ENCODE measurements at regions of chr3 and their contacts with region 1.

Region 1: GRCh38 chr3:157130467-157131251 is 29.3 kb downstream of the CCNL1 start:
- DNase-seq: peak; percentile 97
- H3K4me3 Mint-ChIP-seq: peak overlapping the region; percentile 56
- H3K27ac Mint-ChIP-seq: peak overlapping the region; percentile 96
- H3K4me1 Mint-ChIP-seq: peaks cover 89% of the 10 kb centered on the region
- H3K27me3 Mint-ChIP-seq: no peaks in the 10 kb centered on the region
- CTCF ChIP-seq: peak; percentile 91

Region 2: GRCh38 chr3:156307704-156308103 is 823.0 kb before region 1 on chr3:
- CTCF ChIA-PET with region 1: no interaction called
- intact Hi-C with region 1: loop called (anchors 10 kb)
- DNase-seq: peak; percentile 78
- H3K4me3 Mint-ChIP-seq: no peak overlapping the region
- H3K27ac Mint-ChIP-seq: no peak overlapping the region
- H3K4me1 Mint-ChIP-seq: peaks cover 38% of the 10 kb centered on the region
- H3K27me3 Mint-ChIP-seq: peaks cover 15% of the 10 kb centered on the region
- CTCF ChIP-seq: no peak

Region 3: GRCh38 chr3:156382458-156383346 is 748.0 kb before region 1 on chr3:
- CTCF ChIA-PET with region 1: no interaction called
- intact Hi-C with region 1: loop called (anchors 10 kb)
- DNase-seq: peak; percentile 82
- H3K4me3 Mint-ChIP-seq: no peak overlapping the region
- H3K27ac Mint-ChIP-seq: no peak overlapping the region
- H3K4me1 Mint-ChIP-seq: no peaks in the 10 kb centered on the region
- H3K27me3 Mint-ChIP-seq: peaks cover 80% of the 10 kb centered on the region
- CTCF ChIP-seq: peak; percentile 94

Region 4: DNA sequence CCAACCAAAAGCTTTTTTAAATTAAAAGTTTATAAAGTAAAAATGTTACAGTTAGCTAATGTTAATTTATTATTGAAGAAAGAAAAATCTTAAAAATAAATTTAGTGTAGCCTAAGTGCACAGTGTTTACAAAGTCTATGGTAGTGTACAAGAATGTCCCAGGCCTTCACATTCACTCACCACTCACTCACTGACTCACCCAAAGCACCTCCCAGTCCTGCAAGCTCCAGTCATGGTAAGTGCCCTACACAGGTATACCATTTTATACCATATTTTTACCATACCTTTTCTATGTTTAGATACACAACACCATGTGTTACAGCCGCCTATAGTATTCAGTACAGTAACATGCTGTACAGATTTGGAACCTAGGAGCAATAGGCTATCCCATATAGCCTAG is 604.9 kb before region 1 on chr3:
- CTCF ChIA-PET with region 1: no interaction called
- intact Hi-C with region 1: no loop called
- DNase-seq: no peak
- H3K4me3 Mint-ChIP-seq: no peak overlapping the region
- H3K27ac Mint-ChIP-seq: no peak overlapping the region
- H3K4me1 Mint-ChIP-seq: no peaks in the 10 kb centered on the region
- H3K27me3 Mint-ChIP-seq: no peaks in the 10 kb centered on the region
- CTCF ChIP-seq: no peak

Region 5: GRCh38 chr3:156816800-156817645 is 313.6 kb before region 1 on chr3:
- CTCF ChIA-PET with region 1: interaction called, 7 read pairs
- intact Hi-C with region 1: loop called (anchors 2 kb)
- DNase-seq: peak; percentile 99
- H3K4me3 Mint-ChIP-seq: peak overlapping the region; percentile 94
- H3K27ac Mint-ChIP-seq: peak overlapping the region; percentile 96
- H3K4me1 Mint-ChIP-seq: peaks cover 64% of the 10 kb centered on the region
- H3K27me3 Mint-ChIP-seq: no peaks in the 10 kb centered on the region
- CTCF ChIP-seq: no peak

Region 6: DNA sequence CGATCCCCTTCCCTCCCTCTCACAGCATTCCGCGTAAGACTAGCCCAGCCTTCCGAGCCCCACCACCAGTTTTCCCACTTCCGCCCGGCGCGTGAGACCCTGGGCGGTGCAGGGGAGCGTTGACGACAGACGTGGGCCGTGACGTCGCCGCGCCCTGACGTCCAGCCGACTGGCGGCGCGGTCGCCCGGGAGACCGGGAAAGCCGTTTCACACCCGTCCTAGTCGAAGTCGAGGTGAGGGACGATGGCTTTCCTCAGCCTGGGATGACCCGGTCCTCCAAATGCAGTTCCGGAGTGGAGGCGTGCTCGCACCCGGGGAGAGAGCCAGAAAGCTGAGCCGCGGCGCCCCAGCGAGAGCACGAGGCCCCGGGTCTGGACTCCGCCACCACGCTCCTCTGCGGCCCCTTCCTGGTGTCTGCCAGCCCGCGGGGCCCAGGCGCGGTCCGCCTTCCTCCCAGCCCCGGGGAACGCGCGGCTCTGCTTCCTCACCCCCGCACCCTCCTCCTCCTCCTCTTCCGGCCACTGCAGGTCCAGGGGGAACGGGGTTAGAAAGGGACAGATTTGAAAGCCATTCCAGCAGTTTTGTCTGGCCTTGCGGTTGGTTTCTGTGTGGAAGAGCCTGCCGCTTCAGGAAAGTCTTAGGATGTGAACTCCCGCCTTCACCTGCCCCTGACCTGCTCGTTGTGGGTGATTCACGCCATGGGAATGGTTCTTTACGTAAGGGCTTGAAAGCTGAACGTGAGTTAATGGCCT is 304.3 kb before region 1 on chr3 and contains the start of gene LEKR1:
- CTCF ChIA-PET with region 1: interaction called, 3 read pairs
- intact Hi-C with region 1: loop called (anchors 2 kb)
- DNase-seq: peak; percentile 97
- H3K4me3 Mint-ChIP-seq: peak within 1 kb of the TSS; percentile 85
- H3K27ac Mint-ChIP-seq: peak within 1 kb of the TSS; percentile 99
- H3K4me1 Mint-ChIP-seq: peaks cover 61% of the 10 kb centered on the region
- H3K27me3 Mint-ChIP-seq: no peaks in the 10 kb centered on the region
- CTCF ChIP-seq: no peak
- total RNA-seq, gene LEKR1: 4.5 and 5.1 TPM in 2 replicates

Region 7: GRCh38 chr3:156899951-156900350 is 230.7 kb before region 1 on chr3:
- CTCF ChIA-PET with region 1: no interaction called
- intact Hi-C with region 1: loop called (anchors 10 kb)
- DNase-seq: no peak
- H3K4me3 Mint-ChIP-seq: no peak overlapping the region
- H3K27ac Mint-ChIP-seq: no peak overlapping the region
- H3K4me1 Mint-ChIP-seq: no peaks in the 10 kb centered on the region
- H3K27me3 Mint-ChIP-seq: no peaks in the 10 kb centered on the region
- CTCF ChIP-seq: no peak

Region 8: DNA sequence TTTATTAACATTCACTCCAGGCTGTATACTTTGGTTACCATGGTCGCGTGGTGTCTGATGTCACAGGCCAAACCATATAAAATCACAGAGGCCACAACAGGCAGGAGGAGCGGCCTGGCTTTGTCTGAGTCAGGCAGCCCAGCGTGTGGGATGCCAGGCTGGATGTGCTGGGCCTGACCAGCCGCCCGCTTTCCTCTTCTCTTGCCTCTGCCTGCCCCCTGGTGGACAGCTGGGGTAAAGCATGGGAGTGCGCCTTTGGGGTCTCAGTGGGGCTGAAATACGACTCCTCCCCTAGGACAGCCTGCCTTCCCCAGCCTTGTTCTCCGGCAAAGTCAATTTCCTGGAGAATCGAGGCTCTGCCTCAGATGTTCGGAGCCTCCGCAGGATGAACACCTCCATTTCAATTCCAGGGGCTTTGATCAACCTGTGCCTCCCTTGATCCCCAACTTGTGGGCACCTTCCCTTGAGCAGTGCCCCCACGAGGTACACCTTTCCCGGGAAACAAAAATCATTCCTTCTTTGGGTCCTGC is 48.9 kb before region 1 on chr3:
- CTCF ChIA-PET with region 1: interaction called, 14 read pairs
- intact Hi-C with region 1: no loop called
- DNase-seq: peak; percentile 99
- H3K4me3 Mint-ChIP-seq: no peak overlapping the region
- H3K27ac Mint-ChIP-seq: peak overlapping the region; percentile 94
- H3K4me1 Mint-ChIP-seq: peaks cover 46% of the 10 kb centered on the region
- H3K27me3 Mint-ChIP-seq: no peaks in the 10 kb centered on the region
- CTCF ChIP-seq: peak; percentile 100

Region 9: DNA sequence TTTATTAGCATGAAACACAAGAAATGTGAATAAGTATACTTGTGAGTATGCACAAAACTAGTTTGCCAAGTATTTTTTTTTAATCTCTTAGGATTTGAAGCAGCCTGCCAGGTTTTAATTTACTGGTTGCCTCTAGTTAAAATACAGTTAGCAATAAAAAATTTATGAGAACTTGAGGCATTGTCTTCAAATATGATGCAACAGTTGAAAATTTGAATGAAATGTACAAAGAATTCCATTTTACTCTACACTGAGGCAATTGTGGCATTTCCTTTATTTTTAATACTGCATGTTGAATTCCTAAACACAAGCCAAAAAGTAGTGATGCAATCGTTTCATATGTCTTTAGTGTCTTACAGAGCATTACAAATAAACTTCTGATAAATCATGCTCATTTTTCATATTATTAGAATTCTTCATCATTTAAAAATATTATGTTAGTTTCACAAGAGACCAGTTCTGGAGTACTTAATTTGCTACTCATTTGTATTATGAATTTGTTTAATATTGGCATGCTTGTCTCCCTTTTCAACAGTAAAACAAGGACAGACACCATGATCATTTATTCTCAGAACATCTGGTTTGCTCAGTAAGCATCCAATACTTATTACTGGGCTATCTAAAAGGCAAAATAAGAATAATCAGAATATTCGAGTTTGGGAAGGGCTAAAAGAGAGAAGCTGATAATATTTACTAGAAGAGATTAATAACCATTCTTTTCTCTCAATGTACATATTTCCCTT is 181.1 kb after region 1 on chr3:
- CTCF ChIA-PET with region 1: no interaction called
- intact Hi-C with region 1: no loop called
- DNase-seq: no peak
- H3K4me3 Mint-ChIP-seq: no peak overlapping the region
- H3K27ac Mint-ChIP-seq: peak overlapping the region; percentile 0
- H3K4me1 Mint-ChIP-seq: peaks cover 10% of the 10 kb centered on the region
- H3K27me3 Mint-ChIP-seq: no peaks in the 10 kb centered on the region
- CTCF ChIP-seq: no peak

Region 10: DNA sequence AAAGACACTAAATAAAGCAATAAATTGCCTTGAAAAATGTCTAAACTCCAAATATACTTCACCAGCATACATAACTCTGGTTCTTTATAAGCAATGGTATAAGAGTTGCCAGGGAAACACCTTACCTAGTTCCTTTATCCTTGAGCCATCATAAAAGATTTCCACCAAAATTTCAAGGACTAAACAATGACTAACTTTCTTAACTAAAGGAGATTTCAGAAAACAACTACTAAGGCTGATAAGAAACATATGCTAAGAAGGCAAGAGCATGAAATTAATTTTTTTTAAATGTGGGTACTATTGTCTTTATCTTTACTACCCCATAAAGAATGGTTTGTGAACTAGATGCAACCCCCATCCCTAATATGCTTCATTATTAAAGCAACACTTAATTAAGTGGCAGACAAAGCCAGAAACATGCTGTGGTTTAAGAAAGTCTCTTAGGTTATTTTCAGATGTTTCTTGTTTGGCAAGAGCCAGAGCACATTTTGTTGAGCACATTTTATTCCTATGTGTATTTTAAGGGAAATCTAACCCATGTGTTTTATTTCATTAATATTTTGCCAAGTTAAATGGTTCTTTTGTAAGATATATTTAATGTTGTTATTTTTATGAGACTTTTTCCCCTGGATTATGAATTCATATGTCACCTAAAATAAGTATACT is 390.0 kb after region 1 on chr3:
- CTCF ChIA-PET with region 1: no interaction called
- intact Hi-C with region 1: no loop called
- DNase-seq: no peak
- H3K4me3 Mint-ChIP-seq: no peak overlapping the region
- H3K27ac Mint-ChIP-seq: no peak overlapping the region
- H3K4me1 Mint-ChIP-seq: peaks cover 9% of the 10 kb centered on the region
- H3K27me3 Mint-ChIP-seq: no peaks in the 10 kb centered on the region
- CTCF ChIP-seq: no peak